GM12878 (cell line): ENCODE measurements at regions of chr12 and their contacts with region 1.

Region 1: GRCh38 chr12:14454098-14454907 is 88.8 kb downstream of the ATF7IP start:
- DNase-seq: peak; percentile 30
- ATAC-seq: peak; percentile 97
- H3K4me3 ChIP-seq: no peak overlapping the region
- H3K27ac ChIP-seq: no peak overlapping the region
- H3K4me1 ChIP-seq: no peaks in the 10 kb centered on the region
- H3K27me3 ChIP-seq: no peaks in the 10 kb centered on the region
- CTCF ChIP-seq: peak; percentile 69 to 96 (median 83); a peak in 5 of 6 replicates
- EP300 ChIP-seq: no peak
- POLR2A ChIP-seq: no peak
- RAD21 ChIP-seq: peak; percentile 86

Region 2: DNA sequence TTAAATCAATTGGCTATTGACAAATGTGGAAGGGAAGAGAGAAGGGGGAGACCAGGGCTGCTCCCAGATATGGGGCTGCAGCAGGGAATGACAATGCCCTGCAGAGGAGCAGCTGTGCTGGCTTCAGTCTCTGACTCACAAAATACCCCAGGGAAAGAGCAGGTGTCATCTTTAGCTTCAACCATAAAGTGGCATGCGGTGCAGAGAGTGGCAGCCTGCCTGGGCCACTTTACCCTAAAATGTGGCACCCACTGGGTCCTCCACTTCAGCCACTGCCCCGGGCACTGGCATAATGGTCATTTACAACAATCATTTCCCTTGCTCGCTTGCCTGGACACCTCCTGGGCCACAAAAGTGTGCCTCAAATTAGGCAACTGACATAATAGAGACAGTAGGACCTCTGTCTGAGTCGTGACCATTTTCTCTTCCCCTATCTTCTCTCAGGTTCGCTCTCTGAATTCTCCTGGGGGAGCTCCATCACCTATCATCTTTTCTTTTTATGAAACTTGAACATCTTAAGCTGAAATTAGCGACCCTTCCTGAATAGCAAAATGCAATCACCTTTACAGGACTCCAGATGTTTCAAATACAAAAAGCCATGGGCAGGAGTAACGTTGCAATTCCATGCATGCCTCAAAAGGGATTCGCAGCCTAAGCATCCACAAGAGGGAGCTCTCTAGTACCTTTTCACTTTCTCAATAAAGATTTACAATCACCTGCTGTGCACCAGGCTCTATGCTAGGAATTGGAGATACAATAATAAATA is 268.7 kb before region 1 on chr12:
- CTCF ChIA-PET with region 1: interaction called, 22 read pairs
- POLR2A ChIA-PET with region 1: no interaction called
- RAD21 ChIA-PET with region 1: interaction called, 7 read pairs
- SMC1A ChIA-PET with region 1: interaction called, 8 read pairs
- in situ Hi-C with region 1: no loop called
- intact Hi-C with region 1: no loop called
- DNase-seq: no peak
- ATAC-seq: peak; percentile 91
- H3K4me3 ChIP-seq: no peak overlapping the region
- H3K27ac ChIP-seq: no peak overlapping the region
- H3K4me1 ChIP-seq: peaks cover 4% of the 10 kb centered on the region; the same call in 1 of the 2 replicates
- H3K27me3 ChIP-seq: no peaks in the 10 kb centered on the region
- CTCF ChIP-seq: peak; percentile 65 to 85 (median 68)
- EP300 ChIP-seq: no peak
- POLR2A ChIP-seq: no peak
- RAD21 ChIP-seq: peak; percentile 67

Region 3: DNA sequence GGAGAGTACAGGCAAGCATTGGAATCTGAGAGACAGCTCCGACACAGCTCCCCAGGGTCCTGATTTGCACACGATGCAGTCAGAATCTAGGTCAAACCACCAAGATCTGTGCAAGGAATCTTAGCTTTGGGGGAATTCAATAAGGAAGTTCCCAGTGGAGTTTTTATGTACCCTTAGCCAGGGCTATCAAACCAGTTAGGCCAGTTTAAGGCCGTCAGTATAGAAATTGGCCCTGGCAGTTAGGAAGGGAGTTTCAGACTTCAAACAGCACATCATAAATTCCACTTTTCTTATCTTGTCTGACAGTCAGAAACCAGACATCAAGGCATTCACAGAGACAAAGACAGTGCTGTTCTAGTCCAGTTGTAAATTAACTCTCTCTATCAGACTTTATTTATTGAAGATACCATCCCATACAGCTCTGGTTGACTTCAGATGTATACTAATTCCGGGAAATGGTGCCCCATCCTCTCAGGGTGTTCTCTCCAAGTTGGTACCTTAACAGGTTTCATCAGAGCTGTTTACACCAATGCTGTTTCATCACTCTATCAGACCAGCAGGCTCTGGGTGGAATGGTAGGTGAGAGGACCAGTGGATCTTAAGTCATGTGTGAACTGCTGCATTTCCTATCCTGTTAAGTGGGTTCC is 246.3 kb before region 1 on chr12:
- CTCF ChIA-PET with region 1: no interaction called
- POLR2A ChIA-PET with region 1: no interaction called
- RAD21 ChIA-PET with region 1: no interaction called
- SMC1A ChIA-PET with region 1: no interaction called
- in situ Hi-C with region 1: no loop called
- intact Hi-C with region 1: no loop called
- DNase-seq: no peak
- ATAC-seq: no peak
- H3K4me3 ChIP-seq: no peak overlapping the region
- H3K27ac ChIP-seq: no peak overlapping the region
- H3K4me1 ChIP-seq: no peaks in the 10 kb centered on the region
- H3K27me3 ChIP-seq: no peaks in the 10 kb centered on the region
- CTCF ChIP-seq: no peak
- EP300 ChIP-seq: no peak
- POLR2A ChIP-seq: no peak
- RAD21 ChIP-seq: no peak

Region 4: DNA sequence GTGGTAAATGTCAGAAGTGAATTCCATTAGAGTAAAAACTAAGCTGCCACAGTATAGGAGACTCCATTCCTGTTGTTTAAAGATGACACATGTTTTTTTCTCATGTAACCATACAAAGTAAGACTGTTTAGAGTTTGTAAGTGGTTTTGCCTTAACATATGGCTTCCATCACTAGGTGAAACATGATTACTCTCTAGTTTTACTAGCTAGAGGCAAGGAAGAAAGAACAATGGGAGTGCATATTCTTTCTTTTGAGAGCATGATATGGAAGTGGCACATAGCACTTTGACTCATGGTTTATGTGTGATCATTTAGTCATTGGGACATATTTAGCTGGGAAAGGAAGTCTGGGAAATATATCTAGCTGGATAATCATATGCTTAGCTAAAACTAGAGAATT is 81.1 kb before region 1 on chr12:
- CTCF ChIA-PET with region 1: interaction called, 40 read pairs
- POLR2A ChIA-PET with region 1: interaction called, 3 read pairs
- RAD21 ChIA-PET with region 1: interaction called, 13 read pairs
- SMC1A ChIA-PET with region 1: interaction called, 53 read pairs
- in situ Hi-C with region 1: no loop called
- intact Hi-C with region 1: no loop called
- DNase-seq: no peak
- ATAC-seq: peak; percentile 31
- H3K4me3 ChIP-seq: no peak overlapping the region
- H3K27ac ChIP-seq: peak overlapping the region; percentile 3; the same call in 1 of the 2 replicates
- H3K4me1 ChIP-seq: no peaks in the 10 kb centered on the region; the same call in 1 of the 2 replicates
- H3K27me3 ChIP-seq: no peaks in the 10 kb centered on the region
- CTCF ChIP-seq: no peak
- EP300 ChIP-seq: no peak
- POLR2A ChIP-seq: no peak
- RAD21 ChIP-seq: no peak

Region 5: DNA sequence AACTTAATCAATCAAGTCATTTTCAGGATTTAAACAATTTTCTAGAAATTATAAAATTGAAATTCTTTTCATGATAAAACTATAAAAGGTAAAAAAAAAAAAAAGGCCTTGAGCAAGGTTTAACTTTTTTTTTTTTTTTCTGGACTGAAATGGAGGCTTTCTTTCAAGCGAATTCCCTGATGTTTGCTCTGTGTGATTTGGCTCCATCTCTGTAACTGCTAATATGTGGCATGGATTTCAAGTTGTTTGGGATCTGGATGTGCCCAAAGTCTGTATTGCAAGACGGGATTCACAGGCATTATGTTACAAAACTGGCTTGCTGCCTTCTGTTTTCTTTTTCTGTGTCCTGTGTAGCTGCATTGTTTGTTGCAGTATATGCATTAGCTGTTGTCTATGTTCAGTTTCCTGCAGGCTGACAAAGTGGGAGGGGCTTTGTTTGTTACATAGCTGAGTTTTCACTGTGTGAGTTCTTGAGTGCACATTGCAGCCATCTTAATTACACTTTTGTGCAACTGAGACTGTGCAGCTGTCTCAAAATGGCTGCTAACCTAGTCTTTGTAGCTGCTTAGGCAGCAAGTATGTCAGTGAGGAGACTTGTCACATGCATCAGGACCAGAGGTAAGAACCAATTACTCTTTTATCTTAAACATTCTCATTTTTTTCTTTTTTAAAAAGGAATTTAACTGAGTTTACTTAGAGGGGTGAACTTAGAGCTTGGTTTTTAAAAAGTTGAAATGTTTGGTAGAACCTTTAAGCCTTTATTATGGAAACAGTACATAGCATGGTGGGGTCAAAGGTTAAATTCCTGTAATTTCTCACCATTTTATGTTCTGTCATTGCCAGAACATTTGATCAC is 69.3 kb before region 1 on chr12:
- CTCF ChIA-PET with region 1: interaction called, 8 read pairs
- POLR2A ChIA-PET with region 1: no interaction called
- RAD21 ChIA-PET with region 1: interaction called, 20 read pairs
- SMC1A ChIA-PET with region 1: interaction called, 7 read pairs
- in situ Hi-C with region 1: no loop called
- intact Hi-C with region 1: loop called (anchors 5 kb)
- DNase-seq: peak; percentile 92
- ATAC-seq: peak; percentile 90
- H3K4me3 ChIP-seq: peak overlapping the region; percentile 18; the same call in 1 of the 2 replicates
- H3K27ac ChIP-seq: peak overlapping the region; percentile 63
- H3K4me1 ChIP-seq: peaks cover 5% of the 10 kb centered on the region
- H3K27me3 ChIP-seq: no peaks in the 10 kb centered on the region
- CTCF ChIP-seq: no peak
- EP300 ChIP-seq: no peak; a peak in 1 of 4 replicates
- POLR2A ChIP-seq: peak; percentile 46; the same call in 1 of the 2 replicates
- RAD21 ChIP-seq: no peak

Region 6: DNA sequence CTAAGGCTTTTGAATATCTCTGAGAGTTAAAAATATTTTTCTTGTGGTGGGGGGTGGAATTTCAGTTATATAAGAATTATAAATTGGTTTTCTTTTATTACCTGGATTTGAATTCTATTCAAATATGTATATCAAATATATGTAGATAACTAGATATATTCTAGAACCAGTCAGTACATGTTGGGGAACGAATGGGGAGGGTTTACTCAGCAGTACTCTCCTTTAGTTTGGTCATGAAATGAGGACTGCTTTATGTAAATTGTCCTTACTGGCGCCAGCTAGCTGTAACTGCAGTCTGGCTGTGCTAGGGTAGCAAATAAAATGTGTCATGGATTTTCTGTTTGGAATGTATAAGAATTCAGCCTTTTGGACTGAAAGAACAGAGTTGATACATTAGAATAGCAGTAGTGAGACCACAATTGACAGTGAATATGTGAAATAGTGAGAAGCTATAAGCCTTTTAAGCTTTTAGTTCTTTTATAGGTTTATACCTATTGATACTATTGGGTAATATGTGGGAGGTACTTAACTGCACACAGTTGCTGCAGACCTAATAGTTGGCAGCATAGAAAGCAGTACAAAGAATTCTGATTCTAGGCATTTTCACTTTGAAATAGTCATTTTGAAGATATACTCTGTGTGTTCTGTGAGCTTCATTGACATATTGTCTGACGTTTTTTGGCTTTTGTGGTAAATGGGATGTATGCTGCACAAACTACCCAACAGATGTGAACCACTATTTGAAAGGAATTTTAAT is 59.8 kb before region 1 on chr12:
- CTCF ChIA-PET with region 1: interaction called, 14 read pairs
- POLR2A ChIA-PET with region 1: no interaction called
- RAD21 ChIA-PET with region 1: interaction called, 7 read pairs
- SMC1A ChIA-PET with region 1: interaction called, 16 read pairs
- in situ Hi-C with region 1: no loop called
- intact Hi-C with region 1: loop called (anchors 5 kb)
- DNase-seq: peak; percentile 65
- ATAC-seq: peak; percentile 77
- H3K4me3 ChIP-seq: 0 out of 2 replicates have a peak overlapping the region, but pooled peaks have one; percentile 18
- H3K27ac ChIP-seq: peak overlapping the region; percentile 82
- H3K4me1 ChIP-seq: peaks cover 11% of the 10 kb centered on the region; the same call in 1 of the 2 replicates
- H3K27me3 ChIP-seq: no peaks in the 10 kb centered on the region
- CTCF ChIP-seq: no peak; a peak in 1 of 6 replicates
- EP300 ChIP-seq: no peak
- POLR2A ChIP-seq: 0 out of 2 replicates have a peak, but pooled peaks have one; percentile 22
- RAD21 ChIP-seq: no peak

Region 7: GRCh38 chr12:14443531-14443930 is 10.8 kb before region 1 on chr12:
- CTCF ChIA-PET with region 1: interaction called, 10 read pairs
- POLR2A ChIA-PET with region 1: no interaction called
- RAD21 ChIA-PET with region 1: no interaction called
- SMC1A ChIA-PET with region 1: interaction called, 7 read pairs
- in situ Hi-C with region 1: no loop called
- intact Hi-C with region 1: no loop called
- DNase-seq: no peak
- ATAC-seq: no peak
- H3K4me3 ChIP-seq: no peak overlapping the region
- H3K27ac ChIP-seq: no peak overlapping the region
- H3K4me1 ChIP-seq: no peaks in the 10 kb centered on the region
- H3K27me3 ChIP-seq: no peaks in the 10 kb centered on the region
- CTCF ChIP-seq: no peak
- EP300 ChIP-seq: no peak
- POLR2A ChIP-seq: no peak
- RAD21 ChIP-seq: no peak

Region 8: DNA sequence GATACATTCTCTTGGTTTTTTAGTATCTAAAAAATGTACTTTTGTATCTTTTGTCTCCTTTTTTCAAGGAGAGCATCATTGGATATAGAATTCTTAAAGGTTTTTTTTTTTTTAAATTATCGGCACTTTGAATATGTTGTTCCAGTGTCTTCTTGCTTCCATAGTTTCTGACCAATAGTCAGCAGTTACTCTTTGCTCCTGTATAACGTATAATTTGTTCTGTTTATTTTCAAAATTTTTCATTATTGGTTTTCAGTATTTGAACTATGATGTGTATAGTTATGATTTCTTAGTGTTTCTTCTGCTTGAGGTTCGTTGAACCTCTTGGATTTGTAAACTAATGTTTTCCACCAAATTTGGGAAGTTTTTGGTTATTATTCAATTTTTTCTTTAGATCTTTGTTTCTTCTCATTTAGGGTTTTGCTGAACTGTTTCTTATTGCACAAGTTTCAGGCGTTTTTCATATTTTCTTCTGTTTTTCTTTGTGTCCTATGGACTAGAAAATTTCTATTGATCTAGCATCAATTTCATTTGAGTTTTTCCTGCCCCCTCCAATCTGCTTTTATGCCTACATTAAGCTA is 19.5 kb after region 1 on chr12:
- CTCF ChIA-PET with region 1: interaction called, 11 read pairs
- POLR2A ChIA-PET with region 1: no interaction called
- RAD21 ChIA-PET with region 1: no interaction called
- SMC1A ChIA-PET with region 1: interaction called, 6 read pairs
- in situ Hi-C with region 1: no loop called
- intact Hi-C with region 1: no loop called
- DNase-seq: no peak
- ATAC-seq: no peak
- H3K4me3 ChIP-seq: no peak overlapping the region
- H3K27ac ChIP-seq: no peak overlapping the region
- H3K4me1 ChIP-seq: no peaks in the 10 kb centered on the region
- H3K27me3 ChIP-seq: no peaks in the 10 kb centered on the region
- CTCF ChIP-seq: no peak
- EP300 ChIP-seq: no peak
- POLR2A ChIP-seq: no peak
- RAD21 ChIP-seq: no peak

Region 9: DNA sequence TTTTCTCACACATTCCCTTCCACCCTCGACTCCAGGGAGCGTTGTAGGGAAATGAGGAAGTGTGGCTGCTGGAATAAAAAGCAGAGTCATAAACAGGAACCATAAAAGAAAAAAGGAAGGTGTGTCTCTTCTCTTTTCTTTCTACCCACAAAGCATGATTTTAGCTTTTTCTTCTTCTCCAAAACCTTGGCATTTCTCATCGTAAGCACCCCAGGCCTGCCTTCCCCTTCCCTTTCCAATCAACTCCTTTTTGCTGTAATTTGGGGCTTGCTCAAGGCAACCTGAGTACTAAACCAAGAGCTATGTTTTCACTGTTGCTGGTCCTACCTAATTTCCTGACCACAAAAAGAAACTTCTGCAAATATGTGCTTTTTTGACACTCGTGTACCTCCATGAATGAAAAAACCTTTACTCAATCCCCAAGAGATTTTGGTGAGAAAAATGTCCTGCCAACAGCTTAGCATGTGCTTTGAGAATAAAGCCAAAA is 104.2 kb after region 1 on chr12:
- CTCF ChIA-PET with region 1: no interaction called
- POLR2A ChIA-PET with region 1: no interaction called
- RAD21 ChIA-PET with region 1: no interaction called
- SMC1A ChIA-PET with region 1: no interaction called
- in situ Hi-C with region 1: no loop called
- intact Hi-C with region 1: no loop called
- DNase-seq: no peak
- ATAC-seq: no peak
- H3K4me3 ChIP-seq: no peak overlapping the region
- H3K27ac ChIP-seq: no peak overlapping the region
- H3K4me1 ChIP-seq: no peaks in the 10 kb centered on the region
- H3K27me3 ChIP-seq: no peaks in the 10 kb centered on the region
- CTCF ChIP-seq: no peak
- EP300 ChIP-seq: no peak
- POLR2A ChIP-seq: no peak
- RAD21 ChIP-seq: no peak